ENCODE measurements at regions of chr19 and their contacts with region 1.

Region 1: DNA sequence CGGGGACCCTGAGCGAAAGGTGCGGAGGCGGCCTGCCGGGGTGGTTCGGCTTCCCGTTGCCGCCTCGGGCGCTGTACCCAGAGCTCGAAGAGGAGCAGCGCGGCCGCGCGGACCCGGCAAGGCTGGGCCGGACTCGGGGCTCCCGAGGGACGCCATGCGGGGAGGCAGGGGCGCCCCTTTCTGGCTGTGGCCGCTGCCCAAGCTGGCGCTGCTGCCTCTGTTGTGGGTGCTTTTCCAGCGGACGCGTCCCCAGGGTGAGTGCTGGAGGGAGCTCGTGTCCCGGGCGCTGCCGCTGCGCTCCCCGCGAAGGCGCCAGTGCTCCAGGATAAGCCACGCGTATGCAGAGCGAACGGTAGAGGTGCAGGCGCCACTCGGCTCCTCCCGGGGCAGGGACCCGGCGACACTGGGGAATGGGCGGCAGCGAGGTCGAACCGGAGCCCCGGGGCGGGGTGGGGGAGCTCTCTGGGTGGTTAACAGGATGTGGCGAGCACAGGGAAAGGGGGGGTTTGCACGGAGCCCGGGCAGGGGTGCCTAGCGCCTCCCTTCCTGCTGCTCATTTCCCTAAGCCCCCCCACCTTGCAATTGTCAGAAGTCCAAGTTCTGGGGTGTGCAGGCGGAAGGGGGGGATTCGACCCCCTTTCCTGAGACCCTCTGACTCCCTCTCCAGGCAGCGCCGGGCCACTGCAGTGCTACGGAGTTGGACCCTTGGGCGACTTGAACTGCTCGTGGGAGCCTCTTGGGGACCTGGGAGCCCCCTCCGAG is at the start of gene IL27RA:
- DNase-seq: peak; percentile 81
- CTCF ChIP-seq: peak; percentile 85

Region 2: GRCh38 chr19:13952154-13953035 is 79.5 kb before region 1 on chr19 and contains the start of gene DCAF15:
- CTCF ChIA-PET with region 1: no interaction called
- POLR2A ChIA-PET with region 1: no interaction called
- DNase-seq: peak; percentile 100
- CTCF ChIP-seq: no peak

Region 3: GRCh38 chr19:14048443-14049153 is 16.7 kb after region 1 on chr19:
- CTCF ChIA-PET with region 1: interaction called, 169 read pairs
- POLR2A ChIA-PET with region 1: interaction called, 4 read pairs
- DNase-seq: peak; percentile 75
- CTCF ChIP-seq: peak; percentile 74